ENCODE measurements at regions of chr1 and their contacts with region 1.

Region 1: GRCh38 chr1:231806623-231807495 is 180.3 kb downstream of the DISC1 start:
- DNase-seq: peak; percentile 58 to 65
- H3K4me3 ChIP-seq: no peak overlapping the region
- H3K4me3 Mint-ChIP-seq: no peak overlapping the region
- H3K27ac Mint-ChIP-seq: no peak overlapping the region
- H3K4me1 ChIP-seq: no peaks in the 10 kb centered on the region
- H3K4me1 Mint-ChIP-seq: no peaks in the 10 kb centered on the region
- H3K27me3 ChIP-seq: no peaks in the 10 kb centered on the region
- H3K27me3 Mint-ChIP-seq: no peaks in the 10 kb centered on the region
- CTCF ChIP-seq: peak; percentile 51 to 77

Region 2: DNA sequence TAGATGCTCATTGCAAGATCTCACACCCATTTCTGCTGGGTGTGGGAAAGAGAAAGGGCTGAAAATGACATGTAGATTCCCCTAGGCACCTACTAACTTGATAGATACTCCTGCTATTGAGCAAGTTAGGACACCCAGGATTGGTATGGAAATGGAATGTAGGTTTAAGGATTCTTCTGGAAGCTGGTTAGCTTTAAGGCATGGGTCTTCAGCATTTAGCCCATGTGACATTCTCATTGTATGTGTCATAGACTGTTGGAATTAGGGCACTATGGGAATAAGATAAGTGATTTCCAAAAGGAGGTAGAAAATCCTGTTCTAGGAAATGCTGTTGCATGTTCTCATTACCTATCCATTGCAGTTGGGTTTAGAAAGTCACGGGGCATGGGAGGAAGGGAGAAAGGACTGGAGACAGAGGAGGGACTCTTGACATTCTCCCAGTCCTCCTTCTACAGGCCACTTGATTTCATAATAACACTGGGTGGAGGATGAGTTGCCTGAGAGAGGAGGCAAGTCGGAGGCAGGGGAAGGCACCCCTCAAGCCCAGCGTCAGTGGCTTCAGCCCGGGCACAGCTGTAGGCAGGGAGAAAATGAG is 104.0 kb before region 1 on chr1:
- CTCF ChIA-PET with region 1: no interaction called
- POLR2A ChIA-PET with region 1: no interaction called
- intact Hi-C with region 1: no loop called
- DNase-seq: peak in 1 of 2 experiments; percentile 13
- H3K4me3 ChIP-seq: no peak overlapping the region
- H3K4me3 Mint-ChIP-seq: no peak overlapping the region
- H3K27ac Mint-ChIP-seq: peak overlapping the region; percentile 6
- H3K4me1 ChIP-seq: no peaks in the 10 kb centered on the region; the same call in 1 of the 2 replicates
- H3K4me1 Mint-ChIP-seq: peaks cover 37% of the 10 kb centered on the region
- H3K27me3 ChIP-seq: no peaks in the 10 kb centered on the region
- H3K27me3 Mint-ChIP-seq: no peaks in the 10 kb centered on the region
- CTCF ChIP-seq: no peak

Region 3: DNA sequence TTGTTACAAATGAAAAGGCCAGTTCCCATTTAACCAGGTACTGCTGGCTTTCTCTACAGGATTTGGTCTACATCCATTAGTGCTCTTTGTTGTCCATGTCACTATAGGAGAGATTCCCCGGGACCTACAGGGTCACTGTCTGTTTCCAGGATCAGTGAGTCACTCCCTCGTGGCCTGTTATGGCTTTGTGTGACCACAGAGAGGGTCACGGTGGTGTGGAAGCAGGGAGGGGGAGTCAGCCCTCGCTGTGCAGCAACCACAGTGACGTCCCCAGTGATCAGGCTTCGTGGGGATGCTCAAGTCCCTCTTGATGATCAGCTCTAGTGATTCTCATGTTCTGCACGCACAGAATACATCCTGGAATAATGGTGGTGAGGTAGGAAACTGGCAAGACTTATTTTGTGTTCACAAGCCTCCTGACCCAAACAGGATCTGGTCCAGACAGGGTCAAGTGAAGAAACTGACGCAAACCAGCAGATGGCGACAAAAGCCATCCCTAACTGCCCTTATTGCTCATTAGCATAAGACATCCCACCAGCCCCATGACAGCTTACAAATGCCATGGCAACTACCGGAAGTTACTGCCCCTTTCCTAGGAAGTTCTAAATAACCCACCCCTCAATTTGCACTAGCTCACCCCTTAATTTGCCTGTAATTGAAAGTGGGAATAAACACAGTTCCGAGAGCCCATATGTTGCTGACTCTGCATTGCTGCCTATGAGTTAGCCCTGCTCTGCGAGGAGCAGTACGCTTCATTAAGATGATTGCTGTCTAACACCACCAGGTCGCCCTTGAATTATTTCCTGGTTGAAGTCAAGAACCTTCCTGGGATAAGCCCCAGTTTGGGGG is 81.8 kb before region 1 on chr1:
- CTCF ChIA-PET with region 1: interaction called, 3 read pairs
- POLR2A ChIA-PET with region 1: no interaction called
- intact Hi-C with region 1: loop called (anchors 1 kb)
- DNase-seq: peak; percentile 64 to 65
- H3K4me3 ChIP-seq: no peak overlapping the region
- H3K4me3 Mint-ChIP-seq: no peak overlapping the region
- H3K27ac Mint-ChIP-seq: no peak overlapping the region
- H3K4me1 ChIP-seq: no peaks in the 10 kb centered on the region; the same call in 1 of the 2 replicates
- H3K4me1 Mint-ChIP-seq: peaks cover 4% of the 10 kb centered on the region
- H3K27me3 ChIP-seq: no peaks in the 10 kb centered on the region
- H3K27me3 Mint-ChIP-seq: no peaks in the 10 kb centered on the region
- CTCF ChIP-seq: peak; percentile 48 to 58

Measured in Caco-2 (cell line).